ENCODE measurements at regions of chr9 and their contacts with region 1.

Region 1: DNA sequence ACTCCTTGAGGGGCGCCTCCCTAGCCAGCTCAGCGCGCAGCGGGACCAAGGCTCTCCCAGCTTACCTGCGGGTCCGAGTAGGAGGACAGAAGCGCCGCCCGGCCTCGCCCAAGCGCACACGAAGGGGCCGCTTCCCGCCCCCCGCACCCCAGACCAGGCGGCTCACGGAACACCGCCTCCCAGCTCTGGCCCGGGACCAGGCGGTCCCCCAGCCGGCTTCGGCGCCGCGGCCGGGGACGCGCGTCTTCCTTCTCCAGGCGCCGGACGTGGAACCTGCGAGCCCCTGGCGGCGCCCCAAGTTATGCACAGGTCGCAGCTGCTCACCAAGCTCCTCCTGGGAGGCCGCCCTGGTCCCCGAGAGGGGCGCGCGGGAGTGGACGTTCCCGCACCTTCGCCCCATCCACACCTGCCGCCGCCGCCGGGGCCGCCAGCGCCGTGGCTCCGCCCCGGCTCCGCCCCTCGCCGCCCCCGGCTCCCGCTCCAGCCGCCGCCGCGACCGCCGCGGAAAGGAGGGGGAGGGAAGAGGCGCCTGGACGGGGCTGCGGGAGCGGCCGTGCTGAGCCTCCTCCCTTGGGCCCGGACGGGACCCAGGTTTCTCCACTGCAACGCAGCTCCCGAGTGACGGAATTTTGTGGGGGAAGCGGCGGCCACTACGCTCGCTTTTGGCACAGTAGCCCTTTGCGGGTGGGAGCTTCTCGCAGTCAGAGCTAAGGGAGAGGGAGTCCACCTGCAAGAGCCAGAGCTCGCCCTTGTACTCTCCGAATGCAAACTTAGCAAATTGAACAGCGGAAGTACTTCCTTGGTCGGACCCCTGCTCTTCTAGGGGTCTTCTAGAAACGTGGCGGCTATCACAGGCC is 77.5 kb upstream of the IFNE start:
- DNase-seq: no peak
- ATAC-seq: peak; percentile 86
- H3K4me3 ChIP-seq: peak overlapping the region; percentile 65 to 72
- H3K27ac ChIP-seq: peak overlapping the region; percentile 99
- H3K4me1 ChIP-seq: peaks cover 59 to 83% of the 10 kb centered on the region in 2 experiments
- H3K27me3 ChIP-seq: no peaks in the 10 kb centered on the region
- CTCF ChIP-seq: 0 out of 6 replicates have a peak, but pooled peaks of 1 of the 3 experiments have one; percentile 2
- POLR2A ChIP-seq: no peak
- RAD21 ChIP-seq: peak; percentile 33; the same call in 1 of the 2 replicates

Region 2: GRCh38 chr9:21570643-21571275 is 11.1 kb after region 1 on chr9:
- CTCF ChIA-PET with region 1: no interaction called
- POLR2A ChIA-PET with region 1: interaction called, 31 read pairs
- RAD21 ChIA-PET with region 1: no interaction called
- intact Hi-C with region 1: no loop called
- DNase-seq: no peak
- ATAC-seq: peak; percentile 56
- H3K4me3 ChIP-seq: peak overlapping the region in 1 of 2 experiments; percentile 9; a peak in 1 of 4 replicates
- H3K27ac ChIP-seq: peak overlapping the region; percentile 99
- H3K4me1 ChIP-seq: peaks cover 97 to 100% of the 10 kb centered on the region in 2 experiments
- H3K27me3 ChIP-seq: no peaks in the 10 kb centered on the region
- CTCF ChIP-seq: no peak
- POLR2A ChIP-seq: no peak
- RAD21 ChIP-seq: no peak

Region 3: GRCh38 chr9:21585756-21586752 is 26.4 kb after region 1 on chr9:
- CTCF ChIA-PET with region 1: no interaction called
- POLR2A ChIA-PET with region 1: interaction called, 20 read pairs
- RAD21 ChIA-PET with region 1: no interaction called
- intact Hi-C with region 1: no loop called
- DNase-seq: no peak
- ATAC-seq: 0 out of 2 replicates have a peak, but pooled peaks have one; percentile 9
- H3K4me3 ChIP-seq: no peak overlapping the region
- H3K27ac ChIP-seq: peak overlapping the region; percentile 99
- H3K4me1 ChIP-seq: peaks cover 88 to 99% of the 10 kb centered on the region in 2 experiments
- H3K27me3 ChIP-seq: no peaks in the 10 kb centered on the region
- CTCF ChIP-seq: peak in 1 of 3 experiments; percentile 40; a peak in 2 of 6 replicates
- POLR2A ChIP-seq: no peak
- RAD21 ChIP-seq: 0 out of 2 replicates have a peak, but pooled peaks have one; percentile 25

Region 4: DNA sequence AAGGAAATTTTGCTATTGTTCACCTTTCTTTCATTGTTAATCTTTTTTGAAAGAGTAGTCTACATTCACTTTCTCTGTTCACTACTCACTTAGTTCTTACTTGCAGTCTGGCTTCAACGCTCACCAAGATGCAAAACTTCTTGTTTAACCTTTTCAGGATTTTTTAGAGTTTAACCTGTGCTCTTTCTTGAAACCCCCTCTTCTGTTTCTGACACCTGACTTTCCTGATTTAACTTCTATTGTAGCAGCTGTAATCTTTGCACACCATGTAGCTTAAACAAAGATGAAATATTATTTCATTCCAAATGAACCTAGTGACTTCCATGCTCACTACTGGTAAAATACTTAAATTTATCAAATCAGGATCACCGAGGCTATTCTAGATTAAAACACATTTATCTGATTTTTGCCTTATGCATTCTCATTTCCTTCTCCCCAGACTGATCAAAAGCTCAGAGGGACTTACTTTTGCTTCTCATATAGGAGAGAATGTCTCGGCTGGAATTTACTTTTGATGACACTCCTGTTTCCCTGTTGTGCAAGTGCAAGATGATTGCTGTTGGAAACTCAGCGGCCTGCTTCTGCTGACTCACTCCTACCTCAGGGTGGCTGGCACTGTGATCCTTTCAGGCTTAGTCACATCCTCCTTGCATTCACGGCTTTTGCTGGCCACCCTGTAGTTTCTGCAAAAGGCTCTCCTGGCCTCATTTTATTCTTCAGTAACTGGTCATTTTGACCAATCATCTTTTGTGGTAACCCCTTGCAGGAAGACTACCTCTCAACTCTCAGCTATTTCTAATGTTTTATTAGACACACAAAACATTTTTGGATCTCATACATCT is 31.8 kb after region 1 on chr9:
- CTCF ChIA-PET with region 1: no interaction called
- POLR2A ChIA-PET with region 1: interaction called, 19 read pairs
- RAD21 ChIA-PET with region 1: no interaction called
- intact Hi-C with region 1: no loop called
- DNase-seq: peak; percentile 94
- ATAC-seq: peak; percentile 82
- H3K4me3 ChIP-seq: peak overlapping the region; percentile 51 to 66
- H3K27ac ChIP-seq: peak overlapping the region; percentile 99
- H3K4me1 ChIP-seq: peaks cover 64 to 98% of the 10 kb centered on the region in 2 experiments
- H3K27me3 ChIP-seq: no peaks in the 10 kb centered on the region
- CTCF ChIP-seq: no peak
- POLR2A ChIP-seq: no peak
- RAD21 ChIP-seq: peak; percentile 43; the same call in 1 of the 2 replicates

Region 5: GRCh38 chr9:21777701-21778100 is 218.0 kb after region 1 on chr9:
- CTCF ChIA-PET with region 1: no interaction called
- POLR2A ChIA-PET with region 1: interaction called, 18 read pairs
- RAD21 ChIA-PET with region 1: no interaction called
- intact Hi-C with region 1: no loop called
- DNase-seq: peak; percentile 73
- ATAC-seq: peak; percentile 79
- H3K4me3 ChIP-seq: peak overlapping the region; percentile 19 to 44
- H3K27ac ChIP-seq: peak overlapping the region; percentile 92
- H3K4me1 ChIP-seq: peaks cover 69 to 86% of the 10 kb centered on the region in 2 experiments
- H3K27me3 ChIP-seq: no peaks in the 10 kb centered on the region
- CTCF ChIP-seq: no peak
- POLR2A ChIP-seq: no peak
- RAD21 ChIP-seq: 0 out of 2 replicates have a peak, but pooled peaks have one; percentile 11

Region 6: DNA sequence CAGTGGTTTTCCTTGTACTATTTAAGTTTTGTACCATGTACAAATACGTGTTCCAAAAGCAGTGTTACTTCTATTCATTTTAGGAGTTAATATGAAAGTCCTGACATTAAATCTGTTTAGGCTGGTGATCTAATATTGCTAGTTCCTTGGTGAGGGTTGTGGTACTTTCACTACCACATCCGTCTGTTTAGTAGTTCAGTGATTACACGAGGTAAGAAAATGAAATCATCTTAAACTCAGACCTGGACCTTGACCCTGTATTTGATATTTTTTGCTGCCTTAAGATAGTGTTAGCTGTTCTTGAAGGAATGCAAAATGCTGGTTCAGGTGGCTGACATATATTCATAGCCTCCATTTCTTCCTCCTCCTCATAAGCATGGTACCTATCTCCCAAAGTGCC is 293.1 kb after region 1 on chr9:
- CTCF ChIA-PET with region 1: no interaction called
- POLR2A ChIA-PET with region 1: no interaction called
- RAD21 ChIA-PET with region 1: no interaction called
- intact Hi-C with region 1: no loop called
- DNase-seq: no peak
- ATAC-seq: no peak
- H3K4me3 ChIP-seq: no peak overlapping the region
- H3K27ac ChIP-seq: no peak overlapping the region
- H3K4me1 ChIP-seq: no peaks in the 10 kb centered on the region
- H3K27me3 ChIP-seq: no peaks in the 10 kb centered on the region
- CTCF ChIP-seq: no peak
- POLR2A ChIP-seq: no peak
- RAD21 ChIP-seq: no peak